Left lung (tissue), 14 donors: ENCODE measurements at regions of chr18 and their contacts with region 1.

Region 1: DNA sequence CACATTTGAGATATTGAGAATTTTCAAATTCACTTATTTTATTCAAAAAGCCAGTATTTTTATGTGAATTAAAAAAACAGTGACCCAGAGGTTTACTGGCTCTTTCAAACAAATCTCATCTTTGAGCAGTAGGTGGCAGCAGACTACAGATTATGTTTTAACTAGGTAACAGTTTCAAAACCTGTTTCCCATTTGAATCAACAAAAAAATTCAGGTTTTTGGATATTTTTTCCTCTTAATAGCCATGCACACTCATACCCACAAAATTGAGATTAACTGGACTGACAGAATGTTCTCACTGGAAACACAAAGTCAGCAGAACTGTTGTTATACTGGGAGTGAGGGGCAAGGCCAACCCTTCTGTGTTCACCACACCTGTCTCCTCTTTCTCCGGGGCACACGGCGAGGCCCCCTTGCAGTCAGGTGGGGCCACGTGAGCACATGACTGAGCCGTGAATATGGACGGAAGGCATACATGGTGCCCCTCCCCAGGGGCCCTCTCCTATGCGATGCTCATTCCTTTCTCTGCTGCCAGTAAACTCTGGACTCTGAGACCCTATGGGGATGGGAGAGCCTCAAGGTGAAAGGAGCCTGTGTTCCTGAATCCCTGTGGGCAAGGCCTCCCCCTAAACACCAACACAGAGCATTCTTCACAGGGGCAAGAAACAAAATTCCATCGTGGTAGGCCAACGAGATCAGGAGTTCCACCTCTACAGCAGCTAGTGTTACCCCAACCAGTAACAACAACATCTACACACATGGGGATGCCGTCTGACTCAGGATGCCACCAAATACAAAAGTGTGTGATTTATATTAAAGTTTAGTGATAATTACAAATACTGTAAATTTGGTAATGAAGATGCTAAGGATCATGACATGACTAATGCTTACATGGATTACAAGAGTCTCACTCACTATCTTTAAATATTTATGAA is 80.4 kb downstream of the LPIN2 start:
- DNase-seq: peak in 2 of 4 donors; percentile 65 to 71
- ATAC-seq: peak; percentile 81
- H3K4me3 ChIP-seq: no peak overlapping the region
- H3K27ac ChIP-seq: no peak overlapping the region
- H3K4me1 ChIP-seq: peaks cover 0 to 11% of the 10 kb centered on the region in 2 donors
- H3K27me3 ChIP-seq: no peaks in the 10 kb centered on the region
- CTCF ChIP-seq: peak; percentile 68 to 75

Region 2: GRCh38 chr18:2985628-2986027 is 53.1 kb after region 1 on chr18:
- intact Hi-C with region 1: loop called in 1 of 2 experiments (anchors 10 kb)
- DNase-seq: no peak
- ATAC-seq: peak; percentile 57
- H3K4me3 ChIP-seq: no peak overlapping the region
- H3K27ac ChIP-seq: peak overlapping the region; percentile 27 to 34
- H3K4me1 ChIP-seq: peaks cover 30 to 74% of the 10 kb centered on the region in 2 donors
- H3K27me3 ChIP-seq: no peaks in the 10 kb centered on the region
- CTCF ChIP-seq: peak; percentile 42 to 58

Region 3: GRCh38 chr18:3062798-3063680 is 130.5 kb after region 1 on chr18:
- intact Hi-C with region 1: loop called in 1 of 2 experiments (anchors 10 kb)
- DNase-seq: peak in 3 of 4 donors; percentile 36 to 87 (median 70)
- ATAC-seq: peak; percentile 88
- H3K4me3 ChIP-seq: no peak overlapping the region
- H3K27ac ChIP-seq: peak overlapping the region in 1 of 2 donors; percentile 75
- H3K4me1 ChIP-seq: peaks cover 6 to 45% of the 10 kb centered on the region in 2 donors
- H3K27me3 ChIP-seq: no peaks in the 10 kb centered on the region
- CTCF ChIP-seq: peak; percentile 68 to 71

Region 4: GRCh38 chr18:3135536-3135935 is 203.0 kb after region 1 on chr18:
- intact Hi-C with region 1: loop called in 1 of 2 experiments (anchors 10 kb)
- DNase-seq: no peak
- ATAC-seq: no peak
- H3K4me3 ChIP-seq: no peak overlapping the region
- H3K27ac ChIP-seq: no peak overlapping the region
- H3K4me1 ChIP-seq: no peaks in the 10 kb centered on the region
- H3K27me3 ChIP-seq: no peaks in the 10 kb centered on the region
- CTCF ChIP-seq: no peak

Region 5: GRCh38 chr18:3245853-3246634 is 313.5 kb after region 1 on chr18:
- intact Hi-C with region 1: loop called in 1 of 2 experiments (anchors 5 kb)
- DNase-seq: peak; percentile 79 to 97 (median 94)
- ATAC-seq: peak; percentile 83
- H3K4me3 ChIP-seq: peak overlapping the region; percentile 90 to 93
- H3K27ac ChIP-seq: peak overlapping the region; percentile 99 to 100
- H3K4me1 ChIP-seq: peaks cover 20 to 46% of the 10 kb centered on the region in 2 donors
- H3K27me3 ChIP-seq: no peaks in the 10 kb centered on the region
- CTCF ChIP-seq: peak; percentile 89 to 95